ENCODE measurements at regions of chr7 and their contacts with region 1.

Region 1: DNA sequence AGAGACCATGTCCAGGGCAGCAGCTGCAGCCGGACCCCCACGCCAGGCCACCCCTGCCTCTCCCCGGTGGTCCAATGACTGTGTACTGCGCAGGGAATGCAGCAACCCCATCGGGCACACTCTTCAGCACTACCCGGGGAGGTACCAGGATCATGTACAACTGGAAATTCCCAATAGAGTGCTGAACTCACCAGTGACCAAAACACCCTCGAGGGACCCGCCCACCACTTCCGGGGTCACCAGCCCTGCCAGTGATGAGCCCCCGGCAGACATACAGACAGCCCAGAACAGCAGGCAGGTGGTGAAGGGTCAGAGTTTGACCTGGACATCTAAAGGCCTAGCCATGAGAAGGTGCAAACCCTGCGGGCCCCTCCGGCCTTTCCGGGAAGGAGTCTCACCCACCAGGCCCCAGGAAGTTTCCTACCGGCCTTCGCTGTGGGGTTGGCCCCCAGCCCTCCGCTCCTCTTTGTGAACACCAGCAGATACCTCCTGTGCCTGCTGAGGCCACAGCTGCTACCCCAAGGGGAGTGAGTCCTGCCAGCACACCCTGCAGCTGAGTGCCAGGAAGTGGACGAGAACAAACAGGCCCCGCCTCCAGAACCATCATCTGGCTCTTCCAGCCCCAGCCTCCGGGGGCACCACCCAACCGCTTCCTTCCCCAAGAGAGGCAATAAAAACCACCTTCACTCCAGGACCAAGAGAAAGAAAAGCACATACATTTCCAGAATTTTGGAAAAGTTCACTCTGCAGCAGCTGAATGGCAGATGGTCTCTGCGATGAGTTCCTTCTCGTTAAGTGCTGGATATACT is 5.0 kb upstream of the ANKRD61 start:
- DNase-seq: peak; percentile 80
- ATAC-seq: peak; percentile 99
- H3K4me3 ChIP-seq: peak overlapping the region; percentile 37 to 47 (median 41)
- H3K4me3 Mint-ChIP-seq: peak overlapping the region; percentile 79
- H3K27ac ChIP-seq: peak overlapping the region; percentile 64 to 79
- H3K27ac Mint-ChIP-seq: peak overlapping the region; percentile 94
- H3K4me1 ChIP-seq: peaks cover 15 to 22% of the 10 kb centered on the region in 2 donors
- H3K4me1 Mint-ChIP-seq: peaks cover 22% of the 10 kb centered on the region
- H3K27me3 ChIP-seq: no peaks in the 10 kb centered on the region
- H3K27me3 Mint-ChIP-seq: no peaks in the 10 kb centered on the region
- CTCF ChIP-seq: peak; percentile 41

Region 2: GRCh38 chr7:6008668-6009611 is 17.3 kb before region 1 on chr7 and contains the starts of genes AIMP2 and PMS2:
- CTCF ChIA-PET with region 1: interaction called, 4 read pairs
- POLR2A ChIA-PET with region 1: interaction called, 10 read pairs
- intact Hi-C with region 1: loop called (anchors 1 kb)
- DNase-seq: peak; percentile 96
- ATAC-seq: peak; percentile 90
- H3K4me3 ChIP-seq: peak within 1 kb of the TSS; percentile 47 to 93 (median 85)
- H3K4me3 Mint-ChIP-seq: peak within 1 kb of the TSS; percentile 94
- H3K27ac ChIP-seq: peak within 1 kb of the TSS; percentile 80 to 86
- H3K27ac Mint-ChIP-seq: peak within 1 kb of the TSS; percentile 93
- H3K4me1 ChIP-seq: peaks cover 3 to 9% of the 10 kb centered on the region in 2 donors
- H3K4me1 Mint-ChIP-seq: peaks cover 34% of the 10 kb centered on the region
- H3K27me3 ChIP-seq: no peaks in the 10 kb centered on the region
- H3K27me3 Mint-ChIP-seq: no peaks in the 10 kb centered on the region
- CTCF ChIP-seq: peak; percentile 33
- total RNA-seq, gene AIMP2: 11.7 and 13.1 TPM in 2 replicates
- total RNA-seq, gene PMS2: 20.3 and 22.5 TPM in 2 replicates

Region 3: DNA sequence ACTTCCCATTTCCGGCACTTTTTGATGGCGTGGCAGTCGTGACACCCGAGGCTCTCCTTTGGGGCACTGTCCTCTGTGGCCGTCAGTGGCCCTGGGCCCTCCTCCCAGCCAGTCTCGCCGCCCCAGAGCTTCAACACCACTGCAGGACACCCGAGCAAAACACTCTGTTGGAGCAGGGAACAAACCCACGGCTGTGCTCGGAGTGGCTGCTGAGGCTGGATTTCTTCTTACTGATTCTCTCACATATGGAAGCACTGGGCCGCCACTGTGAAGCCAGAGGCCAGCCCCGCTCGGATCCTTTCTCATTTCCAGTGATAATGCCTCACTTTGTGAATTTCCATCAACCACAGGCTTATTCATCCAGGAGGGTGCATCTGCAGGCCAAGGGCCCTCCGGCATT is 304.4 kb after region 1 on chr7:
- CTCF ChIA-PET with region 1: no interaction called
- POLR2A ChIA-PET with region 1: interaction called, 10 read pairs
- intact Hi-C with region 1: no loop called
- DNase-seq: no peak
- ATAC-seq: no peak
- H3K4me3 ChIP-seq: no peak overlapping the region
- H3K4me3 Mint-ChIP-seq: no peak overlapping the region
- H3K27ac ChIP-seq: no peak overlapping the region
- H3K27ac Mint-ChIP-seq: no peak overlapping the region
- H3K4me1 ChIP-seq: no peaks in the 10 kb centered on the region
- H3K4me1 Mint-ChIP-seq: no peaks in the 10 kb centered on the region
- H3K27me3 ChIP-seq: no peaks in the 10 kb centered on the region
- H3K27me3 Mint-ChIP-seq: no peaks in the 10 kb centered on the region
- CTCF ChIP-seq: no peak

Region 4: GRCh38 chr7:6350433-6351058 is 324.3 kb after region 1 on chr7:
- CTCF ChIA-PET with region 1: no interaction called
- POLR2A ChIA-PET with region 1: no interaction called
- intact Hi-C with region 1: no loop called
- DNase-seq: peak; percentile 25
- ATAC-seq: no peak
- H3K4me3 ChIP-seq: no peak overlapping the region
- H3K4me3 Mint-ChIP-seq: peak overlapping the region; percentile 78
- H3K27ac ChIP-seq: peak overlapping the region in 1 of 2 donors; percentile 49
- H3K27ac Mint-ChIP-seq: peak overlapping the region; percentile 84
- H3K4me1 ChIP-seq: peaks cover 17 to 35% of the 10 kb centered on the region in 2 donors
- H3K4me1 Mint-ChIP-seq: peaks cover 24% of the 10 kb centered on the region
- H3K27me3 ChIP-seq: no peaks in the 10 kb centered on the region
- H3K27me3 Mint-ChIP-seq: no peaks in the 10 kb centered on the region
- CTCF ChIP-seq: no peak

Region 5: GRCh38 chr7:6589829-6590644 is 563.8 kb after region 1 on chr7 and contains the start of gene INTS15:
- CTCF ChIA-PET with region 1: no interaction called
- POLR2A ChIA-PET with region 1: no interaction called
- intact Hi-C with region 1: no loop called
- DNase-seq: peak; percentile 94
- ATAC-seq: peak; percentile 91
- H3K4me3 ChIP-seq: peak within 1 kb of the TSS; percentile 45 to 82 (median 74)
- H3K4me3 Mint-ChIP-seq: peak within 1 kb of the TSS; percentile 88
- H3K27ac ChIP-seq: peak within 1 kb of the TSS; percentile 54 to 76
- H3K27ac Mint-ChIP-seq: peak within 1 kb of the TSS; percentile 88
- H3K4me1 ChIP-seq: peaks cover 15 to 19% of the 10 kb centered on the region in 2 donors
- H3K4me1 Mint-ChIP-seq: peaks cover 13% of the 10 kb centered on the region
- H3K27me3 ChIP-seq: no peaks in the 10 kb centered on the region
- H3K27me3 Mint-ChIP-seq: no peaks in the 10 kb centered on the region
- CTCF ChIP-seq: peak; percentile 74
- total RNA-seq, gene INTS15: 57.1 and 57.8 TPM in 2 replicates